ENCODE measurements at regions of chr2 and their contacts with region 1.

Region 1: GRCh38 chr2:102020596-102021181 is 28.9 kb downstream of the IL1R2 start:
- DNase-seq: peak; percentile 88 to 98 (median 95)
- H3K4me3 ChIP-seq: no peak overlapping the region
- H3K27ac ChIP-seq: peak overlapping the region in 1 of 5 donors; percentile 31
- H3K4me1 ChIP-seq: peaks cover 0 to 8% of the 10 kb centered on the region in 2 donors
- H3K27me3 ChIP-seq: no peaks in the 10 kb centered on the region
- CTCF ChIP-seq: peak; percentile 97 to 100 (median 99)
- POLR2A ChIP-seq: no peak

Region 2: GRCh38 chr2:101501443-101501842 is 519.2 kb before region 1 on chr2:
- intact Hi-C with region 1: no loop called
- DNase-seq: no peak
- H3K4me3 ChIP-seq: no peak overlapping the region
- H3K27ac ChIP-seq: no peak overlapping the region
- H3K4me1 ChIP-seq: no peaks in the 10 kb centered on the region
- H3K27me3 ChIP-seq: no peaks in the 10 kb centered on the region
- CTCF ChIP-seq: no peak
- POLR2A ChIP-seq: no peak

Region 3: GRCh38 chr2:102063941-102064678 is 43.4 kb after region 1 on chr2:
- intact Hi-C with region 1: loop called in 1 of 2 experiments (anchors 5 kb)
- DNase-seq: peak; percentile 89 to 99 (median 98)
- H3K4me3 ChIP-seq: no peak overlapping the region
- H3K27ac ChIP-seq: peak overlapping the region; percentile 89 to 98 (median 95)
- H3K4me1 ChIP-seq: peaks cover 39 to 58% of the 10 kb centered on the region in 2 donors
- H3K27me3 ChIP-seq: no peaks in the 10 kb centered on the region
- CTCF ChIP-seq: no peak
- POLR2A ChIP-seq: peak in 1 of 2 donors; percentile 79

Region 4: DNA sequence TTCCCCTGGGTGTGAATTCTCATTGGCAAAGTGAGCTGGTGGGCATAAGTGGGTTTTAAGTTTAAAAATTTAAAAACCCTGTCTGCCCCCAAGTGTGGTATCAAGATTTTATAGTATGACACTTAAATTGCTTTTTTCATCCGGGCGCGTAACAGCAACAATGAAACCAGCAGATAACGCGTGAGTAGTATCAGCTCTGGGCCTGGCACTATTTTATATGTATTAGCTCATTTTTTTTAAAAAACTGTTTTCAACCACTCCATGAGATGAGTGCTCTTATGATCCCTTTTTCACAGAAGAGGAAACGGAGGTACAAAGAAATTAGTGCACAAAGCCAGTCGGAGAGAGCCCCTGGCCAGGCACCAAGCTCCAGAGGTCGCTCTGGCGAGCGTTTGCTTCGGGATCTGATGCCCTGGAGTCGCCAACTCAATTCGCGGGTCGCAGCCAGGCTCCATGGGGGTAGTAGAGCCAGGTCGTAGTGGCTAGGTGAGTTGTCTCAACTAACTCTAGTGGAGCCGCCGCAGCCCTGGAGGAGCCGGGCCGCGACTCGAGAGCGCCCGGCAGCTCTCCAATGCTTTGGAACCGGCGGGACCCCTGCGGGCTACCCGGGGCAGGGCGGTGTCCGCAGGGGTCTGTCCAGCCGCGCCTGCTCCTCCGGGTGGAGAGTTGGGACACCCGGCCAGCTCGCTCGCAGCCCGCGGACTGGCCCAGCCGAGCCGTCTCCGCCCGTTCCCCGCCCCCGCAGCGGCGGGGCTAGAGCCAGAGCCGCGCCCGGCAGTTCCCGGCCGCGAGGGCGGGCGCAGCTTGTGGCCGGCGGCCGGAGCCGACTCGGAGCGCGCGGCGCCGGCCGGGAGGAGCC is 121.5 kb after region 1 on chr2 and contains the start of gene IL1R1:
- intact Hi-C with region 1: loop called (anchors 10 kb)
- DNase-seq: peak; percentile 79 to 89 (median 84)
- H3K4me3 ChIP-seq: peak within 1 kb of the TSS; percentile 26 to 88 (median 76)
- H3K27ac ChIP-seq: peak within 1 kb of the TSS; percentile 79 to 98 (median 93)
- H3K4me1 ChIP-seq: peaks cover 7 to 12% of the 10 kb centered on the region in 2 donors
- H3K27me3 ChIP-seq: no peaks in the 10 kb centered on the region
- CTCF ChIP-seq: no peak
- POLR2A ChIP-seq: peak; percentile 58 to 91
- total RNA-seq, gene IL1R1: 8.6 to 153 (median 134) TPM

Region 5: DNA sequence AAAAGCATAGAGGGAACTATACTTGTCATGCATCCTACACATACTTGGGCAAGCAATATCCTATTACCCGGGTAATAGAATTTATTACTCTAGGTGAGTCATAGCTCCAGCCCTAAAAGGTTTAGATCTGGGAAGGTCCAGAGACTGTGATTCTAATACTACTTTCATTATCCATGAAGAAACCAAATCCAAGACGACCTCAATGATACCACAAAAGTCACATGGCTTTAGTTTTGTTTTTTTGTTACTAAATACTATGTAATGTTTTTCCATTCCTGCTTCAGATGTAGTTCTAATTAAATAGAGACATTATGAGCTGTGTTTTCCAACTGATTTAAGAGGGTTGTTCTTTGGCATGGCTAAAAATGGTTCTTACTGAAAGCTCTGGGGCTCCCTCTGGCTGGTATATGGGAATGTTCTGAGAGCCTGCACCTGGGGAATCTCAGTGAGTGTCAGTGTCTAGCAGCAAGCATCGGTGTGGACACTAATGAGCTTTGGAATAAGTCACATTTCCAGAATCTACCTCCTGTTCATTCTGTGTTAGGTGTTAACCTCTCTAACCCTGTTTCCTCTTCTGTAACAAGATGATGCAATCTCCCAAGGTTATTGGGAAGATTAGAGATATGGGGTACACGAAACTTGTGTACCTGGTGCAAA is 145.6 kb after region 1 on chr2:
- intact Hi-C with region 1: loop called in 1 of 2 experiments (anchors 5 kb)
- DNase-seq: peak in 6 of 7 donors; percentile 44 to 75 (median 56)
- H3K4me3 ChIP-seq: no peak overlapping the region
- H3K27ac ChIP-seq: peak overlapping the region in 2 of 5 donors; percentile 15 to 31
- H3K4me1 ChIP-seq: peaks cover 5 to 7% of the 10 kb centered on the region in 2 donors
- H3K27me3 ChIP-seq: no peaks in the 10 kb centered on the region
- CTCF ChIP-seq: peak in 5 of 6 experiments; percentile 52 to 76 (median 65)
- POLR2A ChIP-seq: no peak

Region 6: DNA sequence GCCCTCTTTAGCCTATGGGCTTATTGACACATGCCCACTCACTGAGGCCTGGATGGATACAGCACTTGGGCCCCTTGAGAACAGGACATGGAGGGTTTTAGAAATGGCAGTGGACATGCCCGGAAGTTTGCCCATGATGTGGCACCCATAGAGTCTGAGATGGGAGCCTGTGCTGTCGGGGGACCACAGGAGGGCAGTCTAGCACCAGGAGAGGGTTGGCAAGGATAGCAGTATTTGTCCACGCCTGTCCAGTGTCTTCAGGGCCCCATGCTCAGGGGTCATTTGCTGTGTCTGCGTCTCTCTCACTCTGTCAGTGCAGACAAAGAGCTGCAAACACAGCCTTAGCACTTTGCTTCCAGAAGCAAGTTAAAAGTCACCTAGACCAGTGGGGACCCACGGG is 214.8 kb after region 1 on chr2:
- intact Hi-C with region 1: loop called (anchors 5 to 10 kb)
- DNase-seq: no peak
- H3K4me3 ChIP-seq: no peak overlapping the region
- H3K27ac ChIP-seq: no peak overlapping the region
- H3K4me1 ChIP-seq: peaks cover 0 to 4% of the 10 kb centered on the region in 2 donors
- H3K27me3 ChIP-seq: no peaks in the 10 kb centered on the region
- CTCF ChIP-seq: peak in 4 of 6 experiments; percentile 5 to 54 (median 35)
- POLR2A ChIP-seq: no peak

Region 7: GRCh38 chr2:102240640-102241370 is 220.1 kb after region 1 on chr2:
- intact Hi-C with region 1: loop called (anchors 5 to 10 kb)
- DNase-seq: peak; percentile 92 to 97 (median 95)
- H3K4me3 ChIP-seq: peak overlapping the region in 1 of 4 donors; percentile 36
- H3K27ac ChIP-seq: peak overlapping the region; percentile 83 to 93 (median 86)
- H3K4me1 ChIP-seq: peaks cover 0 to 6% of the 10 kb centered on the region in 2 donors
- H3K27me3 ChIP-seq: no peaks in the 10 kb centered on the region
- CTCF ChIP-seq: peak; percentile 96 to 99 (median 98)
- POLR2A ChIP-seq: peak in 1 of 2 donors; percentile 53

Region 8: GRCh38 chr2:102355526-102356380 is 335.1 kb after region 1 on chr2 and contains the start of gene IL18R1:
- intact Hi-C with region 1: loop called in 1 of 2 experiments (anchors 10 kb)
- DNase-seq: peak; percentile 64 to 81 (median 75)
- H3K4me3 ChIP-seq: peak within 1 kb of the TSS in 3 of 4 donors; percentile 32 to 88 (median 36)
- H3K27ac ChIP-seq: peak within 1 kb of the TSS in 3 of 5 donors; percentile 29 to 72 (median 44)
- H3K4me1 ChIP-seq: peaks cover 0 to 4% of the 10 kb centered on the region in 2 donors
- H3K27me3 ChIP-seq: no peaks in the 10 kb centered on the region
- CTCF ChIP-seq: peak; percentile 43 to 87 (median 68)
- POLR2A ChIP-seq: peak in 1 of 2 donors; percentile 21
- total RNA-seq, gene IL18R1: 1.2 to 5.5 (median 4.3) TPM